Stomach (tissue), 19 donors: ENCODE measurements at regions of chr9 and their contacts with region 1.

Region 1: GRCh38 chr9:130042833-130043653 is at the start of gene FNBP1:
- DNase-seq: peak; percentile 78 to 95
- H3K4me3 ChIP-seq: peak within 1 kb of the TSS; percentile 85 to 99 (median 91)
- H3K27ac ChIP-seq: peak within 1 kb of the TSS; percentile 90 to 97 (median 95)
- H3K4me1 ChIP-seq: peaks cover 31 to 65% (median 52%) of the 10 kb centered on the region in 4 donors
- H3K27me3 ChIP-seq: no peaks in the 10 kb centered on the region
- CTCF ChIP-seq: no peak
- EP300 ChIP-seq: no peak
- POLR2A ChIP-seq: peak in 1 of 4 donors; percentile 19
- total RNA-seq, gene FNBP1: 52.7 to 129 (median 69.6) TPM

Region 2: DNA sequence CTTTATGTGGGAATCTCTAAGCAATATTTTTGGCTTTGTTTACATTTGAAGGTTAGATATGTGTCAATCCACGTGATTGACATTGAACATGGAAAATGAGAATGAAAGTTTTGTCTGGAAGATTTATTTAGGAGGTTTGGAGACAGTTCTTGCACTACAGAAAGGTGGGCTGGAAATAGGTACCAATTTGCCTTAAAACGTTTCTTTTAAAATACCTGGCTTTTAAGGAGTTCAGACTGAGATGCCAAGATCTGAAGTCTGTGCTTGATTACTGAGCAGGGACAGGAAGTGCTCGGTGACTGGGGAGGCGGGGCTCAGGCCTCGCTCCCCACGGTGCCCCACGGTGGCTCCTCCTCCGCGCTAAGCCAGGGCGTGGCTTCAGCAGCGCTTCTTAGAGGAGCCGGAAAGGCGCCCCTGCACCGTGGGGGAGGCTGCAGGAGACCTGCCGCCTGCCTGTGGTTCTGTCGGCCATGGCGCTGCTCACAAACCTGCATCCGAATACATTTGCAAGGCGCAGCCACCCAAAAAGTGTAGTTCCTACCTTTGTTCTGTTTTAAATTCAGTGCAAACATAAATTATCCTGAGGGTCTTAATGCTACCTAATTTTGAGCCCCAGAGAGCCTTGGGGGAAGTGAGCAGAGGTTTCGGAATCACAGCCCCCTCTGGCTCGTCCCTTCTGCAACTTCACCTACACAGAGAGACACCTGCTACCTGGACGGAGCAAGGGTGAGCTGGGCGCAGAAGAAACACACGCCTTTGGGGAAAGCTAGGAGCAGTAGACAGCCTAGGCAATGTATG is 158.6 kb before region 1 on chr9:
- intact Hi-C with region 1: loop called (anchors 10 kb)
- DNase-seq: peak; percentile 93 to 97
- H3K4me3 ChIP-seq: peak overlapping the region; percentile 26 to 51 (median 38)
- H3K27ac ChIP-seq: peak overlapping the region; percentile 56 to 92 (median 85)
- H3K4me1 ChIP-seq: peaks cover 26 to 67% (median 37%) of the 10 kb centered on the region in 4 donors
- H3K27me3 ChIP-seq: no peaks in the 10 kb centered on the region
- CTCF ChIP-seq: no peak
- EP300 ChIP-seq: no peak
- POLR2A ChIP-seq: no peak

Region 3: DNA sequence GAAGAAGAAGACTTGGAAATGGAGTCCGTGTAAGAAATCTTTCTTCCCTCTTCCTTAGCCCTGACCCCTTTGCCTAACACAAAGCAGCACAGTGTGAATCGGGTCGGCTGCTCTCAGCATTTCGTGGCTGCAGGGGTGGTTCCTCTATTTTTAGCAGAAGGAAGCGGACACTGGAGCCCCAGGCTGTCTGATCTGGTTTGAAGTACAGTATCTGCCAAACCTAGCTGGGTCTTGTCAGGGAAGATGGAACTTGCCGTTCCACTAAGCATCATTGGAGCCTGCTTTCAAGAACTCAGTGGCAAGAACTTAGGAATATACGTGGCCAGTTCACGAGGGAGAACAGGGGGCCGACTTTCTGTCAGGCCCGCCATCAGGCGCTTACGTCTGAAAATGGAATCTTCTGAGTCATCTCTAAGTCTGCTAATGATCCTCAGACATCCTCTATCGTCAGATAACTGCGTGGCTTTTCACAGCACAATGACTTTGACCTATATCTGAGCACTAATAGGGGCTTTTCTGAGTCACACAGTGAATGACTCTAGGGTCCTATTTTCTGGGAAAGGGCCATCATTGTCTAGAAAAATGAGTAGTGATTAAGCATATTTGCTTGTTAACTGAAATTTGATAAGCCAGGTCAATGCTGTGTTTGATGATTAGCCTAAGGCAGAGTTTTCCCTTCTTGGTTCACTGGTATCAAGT is 85.8 kb after region 1 on chr9:
- intact Hi-C with region 1: no loop called
- DNase-seq: peak in 1 of 2 donors; percentile 71
- H3K4me3 ChIP-seq: no peak overlapping the region
- H3K27ac ChIP-seq: peak overlapping the region; percentile 45 to 81 (median 62)
- H3K4me1 ChIP-seq: peaks cover 0 to 34% (median 8%) of the 10 kb centered on the region in 4 donors
- H3K27me3 ChIP-seq: no peaks in the 10 kb centered on the region
- CTCF ChIP-seq: no peak
- EP300 ChIP-seq: no peak
- POLR2A ChIP-seq: no peak

Region 4: GRCh38 chr9:130884980-130885696 is 842.1 kb after region 1 on chr9:
- intact Hi-C with region 1: no loop called
- DNase-seq: no peak
- H3K4me3 ChIP-seq: no peak overlapping the region
- H3K27ac ChIP-seq: peak overlapping the region in 1 of 5 donors; percentile 66
- H3K4me1 ChIP-seq: peaks cover 0 to 37% (median 12%) of the 10 kb centered on the region in 4 donors
- H3K27me3 ChIP-seq: no peaks in the 10 kb centered on the region
- CTCF ChIP-seq: no peak
- EP300 ChIP-seq: no peak
- POLR2A ChIP-seq: no peak